WTC11 (cell line): ENCODE measurements at regions of chr2 and their contacts with region 1.

Region 1: DNA sequence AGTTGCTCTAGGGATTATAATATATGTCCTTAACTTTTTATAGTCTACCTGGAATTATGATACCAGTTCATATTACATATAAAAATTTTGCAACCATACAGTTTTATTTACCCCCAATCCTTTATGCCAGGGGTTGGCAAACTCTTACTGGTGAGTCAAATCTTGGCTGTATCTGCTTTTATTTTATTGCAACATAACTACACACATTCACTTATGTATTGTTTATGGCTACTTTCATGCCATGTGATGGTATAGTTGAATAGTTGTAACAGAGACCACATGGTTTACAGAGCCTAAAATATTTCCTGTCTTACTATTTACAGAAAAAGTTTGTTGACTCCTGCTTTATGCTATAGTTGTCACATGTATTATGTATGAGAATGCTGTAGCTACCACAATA is 25.8 kb upstream of the DLX2 start:
- DNase-seq: no peak
- ATAC-seq: no peak
- H3K4me3 Mint-ChIP-seq: no peak overlapping the region
- H3K27ac Mint-ChIP-seq: no peak overlapping the region
- H3K4me1 Mint-ChIP-seq: peaks cover 27% of the 10 kb centered on the region
- H3K27me3 Mint-ChIP-seq: peaks cover 51% of the 10 kb centered on the region
- CTCF ChIP-seq: no peak

Region 2: DNA sequence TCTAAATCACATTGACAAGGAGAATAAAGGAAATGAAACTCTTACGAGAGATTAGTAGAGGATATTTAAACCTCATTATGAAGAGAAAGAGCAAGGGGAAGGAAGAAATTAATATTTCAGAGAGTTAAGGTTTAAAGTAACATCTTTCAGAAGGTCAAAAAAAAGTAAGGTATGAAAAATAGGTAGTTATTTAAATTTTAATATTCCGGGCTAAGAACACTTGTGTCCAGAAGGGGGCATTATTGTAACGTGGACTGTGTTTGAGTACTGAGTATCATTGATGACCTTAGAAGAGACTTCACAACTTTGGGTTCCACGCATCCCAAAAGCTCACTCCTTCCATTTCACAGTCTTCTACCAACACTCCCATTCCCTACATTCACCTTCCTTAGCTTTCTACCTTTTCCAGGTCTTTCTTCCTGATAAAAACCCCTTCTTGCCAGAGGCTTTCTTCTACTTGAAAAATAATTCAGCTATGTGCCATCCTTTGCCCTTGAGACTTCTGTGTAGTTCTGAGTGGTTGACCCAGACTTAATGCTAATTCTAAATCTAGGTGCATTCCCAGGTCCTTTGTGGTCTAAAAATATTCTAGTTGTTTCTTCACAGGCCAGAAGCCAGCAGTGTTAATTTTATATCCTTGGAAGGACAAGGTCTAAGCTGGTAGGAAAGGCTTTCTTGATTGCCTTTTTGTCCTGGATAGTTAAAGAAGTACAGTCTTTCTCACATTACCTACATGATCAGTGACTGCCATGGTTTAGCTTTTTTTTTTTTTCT is 424.7 kb before region 1 on chr2:
- CTCF ChIA-PET with region 1: interaction called, 14 read pairs
- POLR2A ChIA-PET with region 1: no interaction called
- DNase-seq: no peak
- ATAC-seq: peak; percentile 52; the same call in 1 of the 2 replicates
- H3K4me3 Mint-ChIP-seq: no peak overlapping the region
- H3K27ac Mint-ChIP-seq: peak overlapping the region; percentile 67; the same call in 1 of the 2 replicates
- H3K4me1 Mint-ChIP-seq: peaks cover 8% of the 10 kb centered on the region; the same call in 1 of the 2 replicates
- H3K27me3 Mint-ChIP-seq: no peaks in the 10 kb centered on the region
- CTCF ChIP-seq: peak; percentile 28; the same call in 1 of the 2 replicates

Region 3: GRCh38 chr2:172084734-172085459 is 43.6 kb before region 1 on chr2:
- CTCF ChIA-PET with region 1: interaction called, 11 read pairs
- POLR2A ChIA-PET with region 1: no interaction called
- DNase-seq: peak; percentile 92
- ATAC-seq: peak; percentile 77
- H3K4me3 Mint-ChIP-seq: peak overlapping the region; percentile 87
- H3K27ac Mint-ChIP-seq: no peak overlapping the region
- H3K4me1 Mint-ChIP-seq: peaks cover 81% of the 10 kb centered on the region
- H3K27me3 Mint-ChIP-seq: peaks cover 100% of the 10 kb centered on the region
- CTCF ChIP-seq: no peak

Region 4: DNA sequence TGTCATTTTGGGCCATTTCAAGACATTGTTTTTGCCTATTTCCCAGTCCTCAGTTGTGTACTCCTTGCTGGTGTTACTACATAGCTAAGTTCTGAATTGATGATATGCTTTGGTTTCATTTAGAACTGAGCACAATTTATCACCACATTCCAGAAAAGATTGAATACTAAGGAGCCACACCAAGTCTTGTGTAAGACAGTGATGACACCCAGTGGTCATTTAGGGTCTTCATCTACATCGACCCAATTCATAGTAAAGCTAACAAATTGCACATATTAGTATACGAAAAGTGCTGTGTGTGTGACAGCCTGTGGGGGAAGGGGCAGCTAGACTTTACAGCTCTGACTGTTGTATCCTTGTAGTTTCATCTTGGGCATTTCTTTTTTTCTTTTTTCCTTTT is 14.9 kb before region 1 on chr2:
- CTCF ChIA-PET with region 1: interaction called, 67 read pairs
- POLR2A ChIA-PET with region 1: no interaction called
- DNase-seq: no peak
- ATAC-seq: peak; percentile 42
- H3K4me3 Mint-ChIP-seq: no peak overlapping the region
- H3K27ac Mint-ChIP-seq: no peak overlapping the region
- H3K4me1 Mint-ChIP-seq: peaks cover 10% of the 10 kb centered on the region
- H3K27me3 Mint-ChIP-seq: peaks cover 36% of the 10 kb centered on the region
- CTCF ChIP-seq: 0 out of 2 replicates have a peak, but pooled peaks have one; percentile 27

Region 5: GRCh38 chr2:172172513-172173173 is 44.2 kb after region 1 on chr2:
- CTCF ChIA-PET with region 1: interaction called, 15 read pairs
- POLR2A ChIA-PET with region 1: no interaction called
- DNase-seq: peak; percentile 87
- ATAC-seq: peak; percentile 99
- H3K4me3 Mint-ChIP-seq: peak overlapping the region; percentile 67
- H3K27ac Mint-ChIP-seq: no peak overlapping the region
- H3K4me1 Mint-ChIP-seq: peaks cover 19% of the 10 kb centered on the region
- H3K27me3 Mint-ChIP-seq: peaks cover 10% of the 10 kb centered on the region
- CTCF ChIP-seq: 0 out of 2 replicates have a peak, but pooled peaks have one; percentile 44

Region 6: DNA sequence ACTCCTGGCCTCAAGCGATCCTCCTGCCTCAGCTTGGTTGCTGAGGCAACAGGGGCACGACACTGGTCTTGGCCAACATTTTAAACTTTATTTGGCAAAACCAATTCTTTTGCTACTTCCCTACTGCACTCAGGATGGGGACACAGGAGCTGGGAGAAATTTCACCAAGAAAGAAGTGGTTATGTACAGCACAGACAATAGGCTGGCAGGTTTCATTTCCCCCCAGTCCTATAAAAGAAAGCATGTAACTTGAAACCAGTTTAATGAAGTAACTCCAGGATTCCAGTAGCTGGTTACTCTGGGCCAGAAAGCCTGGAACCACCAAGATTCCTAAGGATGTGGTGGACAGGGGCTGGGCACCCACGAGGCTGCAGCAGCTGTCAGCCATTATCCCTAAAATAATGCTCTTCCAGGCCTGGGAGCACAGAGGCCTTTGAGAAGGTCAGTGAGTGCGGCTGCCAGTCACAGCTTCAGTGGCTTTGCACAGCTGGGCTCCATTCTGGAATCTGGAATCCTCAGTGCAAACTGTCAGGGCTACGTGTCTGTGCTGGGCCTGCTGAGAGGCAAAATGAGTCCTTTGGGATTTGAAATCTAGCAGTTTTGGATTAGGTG is 156.6 kb after region 1 on chr2:
- CTCF ChIA-PET with region 1: no interaction called
- POLR2A ChIA-PET with region 1: no interaction called
- DNase-seq: peak; percentile 58
- ATAC-seq: peak; percentile 94
- H3K4me3 Mint-ChIP-seq: no peak overlapping the region
- H3K27ac Mint-ChIP-seq: peak overlapping the region; percentile 26
- H3K4me1 Mint-ChIP-seq: peaks cover 28% of the 10 kb centered on the region
- H3K27me3 Mint-ChIP-seq: no peaks in the 10 kb centered on the region
- CTCF ChIP-seq: no peak

Region 7: DNA sequence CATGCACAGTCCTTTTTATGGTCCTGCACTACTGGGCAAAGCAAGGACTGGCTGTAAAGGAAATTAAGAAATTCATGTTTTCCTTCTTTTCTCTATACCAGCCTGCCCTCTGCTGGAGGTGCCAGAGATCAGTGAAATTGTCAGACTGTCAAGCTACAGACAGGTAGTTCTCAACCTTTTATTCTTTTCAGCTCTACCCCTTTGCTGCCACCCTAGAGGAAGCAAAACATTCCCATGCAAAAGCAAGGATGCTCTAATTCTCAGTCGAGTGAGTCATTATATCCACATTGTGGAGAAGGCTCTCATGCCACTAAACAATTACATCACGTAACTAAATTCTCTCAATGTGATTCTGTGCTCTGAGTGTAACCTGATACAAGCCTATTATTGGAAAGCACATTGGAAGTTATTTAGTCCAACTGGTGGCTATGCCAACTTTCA is 582.1 kb after region 1 on chr2:
- CTCF ChIA-PET with region 1: interaction called, 10 read pairs
- POLR2A ChIA-PET with region 1: no interaction called
- DNase-seq: peak; percentile 38
- ATAC-seq: peak; percentile 81
- H3K4me3 Mint-ChIP-seq: no peak overlapping the region
- H3K27ac Mint-ChIP-seq: no peak overlapping the region
- H3K4me1 Mint-ChIP-seq: no peaks in the 10 kb centered on the region
- H3K27me3 Mint-ChIP-seq: no peaks in the 10 kb centered on the region
- CTCF ChIP-seq: peak; percentile 50; the same call in 1 of the 2 replicates